T-cell (primary cell): ENCODE measurements at regions of chr13 and their contacts with region 1.

Region 1: GRCh38 chr13:21579754-21580316 is 24.1 kb downstream of the MICU2 start:
- DNase-seq: peak in 1 of 35 experiments; percentile 49
- ATAC-seq: peak in 3 of 4 experiments; percentile 43 to 74 (median 57)
- H3K4me3 ChIP-seq: no peak overlapping the region
- H3K4me3 Mint-ChIP-seq: peak overlapping the region in 1 of 3 donors; percentile 3
- H3K27ac ChIP-seq: no peak overlapping the region
- H3K27ac Mint-ChIP-seq: peak overlapping the region; percentile 39 to 66
- H3K4me1 ChIP-seq: peaks cover 5 to 23% of the 10 kb centered on the region in 2 experiments
- H3K4me1 Mint-ChIP-seq: peaks cover 42 to 48% (median 47%) of the 10 kb centered on the region in 3 donors
- H3K27me3 ChIP-seq: no peaks in the 10 kb centered on the region
- H3K27me3 Mint-ChIP-seq: no peaks in the 10 kb centered on the region

Region 2: GRCh38 chr13:21542563-21542962 is 37.3 kb before region 1 on chr13:
- CTCF ChIA-PET with region 1: interaction called in 1 of 2 experiments, 5 read pairs
- POLR2A ChIA-PET with region 1: interaction called, 9 to 10 read pairs
- DNase-seq: no peak
- ATAC-seq: no peak
- H3K4me3 ChIP-seq: no peak overlapping the region
- H3K4me3 Mint-ChIP-seq: no peak overlapping the region
- H3K27ac ChIP-seq: no peak overlapping the region
- H3K27ac Mint-ChIP-seq: no peak overlapping the region
- H3K4me1 ChIP-seq: no peaks in the 10 kb centered on the region
- H3K4me1 Mint-ChIP-seq: peaks cover 37 to 43% (median 39%) of the 10 kb centered on the region in 3 donors
- H3K27me3 ChIP-seq: no peaks in the 10 kb centered on the region
- H3K27me3 Mint-ChIP-seq: no peaks in the 10 kb centered on the region